Activated naive CD4-positive, alpha-beta T cell treated with anti-CD3 and anti-CD28 coated beads for 36 hours (primary cell): ENCODE measurements at regions of chr16 and their contacts with region 1.

Region 1: DNA sequence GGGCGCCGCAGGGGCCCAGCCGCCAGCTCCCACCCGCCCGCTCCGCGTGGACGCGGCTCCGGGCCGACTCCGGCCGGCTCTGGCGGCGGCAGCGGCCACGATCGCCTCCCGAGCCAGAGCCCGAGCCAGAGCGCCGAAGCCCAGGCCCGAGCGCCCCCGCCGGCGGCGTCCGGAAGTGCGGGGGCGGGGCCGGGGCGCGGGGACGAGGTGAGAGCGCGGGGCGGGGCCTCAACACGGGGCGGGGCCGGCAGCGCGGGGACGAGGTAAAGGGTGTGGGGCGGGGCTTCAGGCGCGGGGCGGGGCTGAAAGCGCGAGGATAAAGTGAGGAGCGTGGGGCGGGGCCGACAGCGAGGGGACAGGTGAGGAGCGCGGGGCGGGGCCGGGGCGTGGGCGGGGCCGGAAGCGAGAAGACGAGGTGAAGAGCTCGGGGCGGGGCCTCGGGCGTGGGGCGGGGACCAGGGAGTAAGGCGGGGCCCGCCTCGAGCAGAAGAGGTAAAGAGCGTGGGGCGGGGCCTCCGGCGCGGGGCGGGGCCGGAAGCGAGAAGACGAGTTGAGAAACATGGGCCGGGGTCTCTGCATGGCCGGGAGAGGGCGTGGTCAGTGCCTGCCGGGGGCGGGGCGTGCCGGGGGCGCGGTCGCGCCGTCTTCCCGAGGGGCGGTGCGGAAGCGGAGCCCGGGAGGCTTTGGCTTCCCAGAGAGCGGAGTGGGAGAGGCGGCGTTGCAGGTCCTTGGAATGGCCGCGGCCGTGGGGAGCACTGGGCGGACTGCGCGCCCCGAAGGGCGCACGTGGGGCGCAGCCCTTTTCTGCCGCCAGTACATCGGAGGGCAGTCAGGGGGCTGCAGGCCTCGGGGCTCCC is at the start of gene AXIN1:
- DNase-seq: peak; percentile 100
- H3K4me3 Mint-ChIP-seq: peak within 1 kb of the TSS; percentile 91
- H3K27ac Mint-ChIP-seq: peak within 1 kb of the TSS; percentile 82
- H3K4me1 Mint-ChIP-seq: peaks cover 48% of the 10 kb centered on the region
- H3K27me3 Mint-ChIP-seq: no peaks in the 10 kb centered on the region
- total RNA-seq, gene AXIN1: 17.5 to 17.9 TPM

Region 2: DNA sequence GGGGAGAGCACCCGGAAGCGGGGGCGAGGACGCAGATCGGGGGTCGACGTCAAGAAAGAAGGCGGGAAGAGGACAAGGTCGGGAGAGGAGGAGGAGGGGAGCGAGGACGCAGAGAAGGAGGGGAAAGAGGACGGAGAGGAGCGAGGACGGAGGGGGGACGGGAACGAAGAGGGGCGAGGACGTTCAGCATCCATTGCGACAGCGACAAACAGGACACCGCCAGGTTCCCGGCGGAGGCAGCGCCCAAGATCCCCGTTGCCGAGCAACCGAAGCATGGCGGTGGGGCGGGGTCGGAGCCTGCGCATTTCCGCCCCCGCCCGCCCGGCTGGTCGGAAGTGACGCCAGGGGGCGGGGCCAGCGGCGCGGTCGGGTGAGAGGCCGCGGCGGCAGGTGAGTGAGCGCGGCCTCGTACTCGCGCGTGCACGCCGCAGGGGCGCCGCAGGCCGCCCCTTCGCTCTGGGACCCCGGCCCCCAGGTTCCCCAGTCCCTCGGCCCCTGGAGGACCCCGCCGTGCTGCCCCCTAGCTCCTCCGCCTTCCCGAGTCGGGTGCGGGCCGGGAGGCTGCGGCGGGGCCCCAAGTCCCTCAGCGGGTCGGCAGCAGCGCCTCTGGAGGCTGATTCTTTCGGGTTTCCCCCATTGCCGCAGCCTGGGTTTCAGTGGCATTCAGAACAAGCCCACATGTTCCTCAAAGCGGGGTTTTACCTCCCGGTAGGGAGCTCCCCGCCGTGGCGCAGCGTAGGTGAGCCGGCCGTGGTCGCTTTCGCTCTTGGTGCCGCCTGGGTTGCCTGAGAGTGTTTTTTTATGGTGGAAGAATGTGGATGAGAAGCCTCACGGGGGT is 118.1 kb before region 1 on chr16 and contains the start of gene FAM234A:
- CTCF ChIA-PET with region 1: no interaction called
- intact Hi-C with region 1: loop called (anchors 1 kb)
- DNase-seq: peak; percentile 97
- H3K4me3 Mint-ChIP-seq: peak within 1 kb of the TSS; percentile 94
- H3K27ac Mint-ChIP-seq: peak within 1 kb of the TSS; percentile 97
- H3K4me1 Mint-ChIP-seq: peaks cover 23% of the 10 kb centered on the region
- H3K27me3 Mint-ChIP-seq: no peaks in the 10 kb centered on the region
- total RNA-seq, gene FAM234A: 25.9 to 27.4 TPM

Region 3: DNA sequence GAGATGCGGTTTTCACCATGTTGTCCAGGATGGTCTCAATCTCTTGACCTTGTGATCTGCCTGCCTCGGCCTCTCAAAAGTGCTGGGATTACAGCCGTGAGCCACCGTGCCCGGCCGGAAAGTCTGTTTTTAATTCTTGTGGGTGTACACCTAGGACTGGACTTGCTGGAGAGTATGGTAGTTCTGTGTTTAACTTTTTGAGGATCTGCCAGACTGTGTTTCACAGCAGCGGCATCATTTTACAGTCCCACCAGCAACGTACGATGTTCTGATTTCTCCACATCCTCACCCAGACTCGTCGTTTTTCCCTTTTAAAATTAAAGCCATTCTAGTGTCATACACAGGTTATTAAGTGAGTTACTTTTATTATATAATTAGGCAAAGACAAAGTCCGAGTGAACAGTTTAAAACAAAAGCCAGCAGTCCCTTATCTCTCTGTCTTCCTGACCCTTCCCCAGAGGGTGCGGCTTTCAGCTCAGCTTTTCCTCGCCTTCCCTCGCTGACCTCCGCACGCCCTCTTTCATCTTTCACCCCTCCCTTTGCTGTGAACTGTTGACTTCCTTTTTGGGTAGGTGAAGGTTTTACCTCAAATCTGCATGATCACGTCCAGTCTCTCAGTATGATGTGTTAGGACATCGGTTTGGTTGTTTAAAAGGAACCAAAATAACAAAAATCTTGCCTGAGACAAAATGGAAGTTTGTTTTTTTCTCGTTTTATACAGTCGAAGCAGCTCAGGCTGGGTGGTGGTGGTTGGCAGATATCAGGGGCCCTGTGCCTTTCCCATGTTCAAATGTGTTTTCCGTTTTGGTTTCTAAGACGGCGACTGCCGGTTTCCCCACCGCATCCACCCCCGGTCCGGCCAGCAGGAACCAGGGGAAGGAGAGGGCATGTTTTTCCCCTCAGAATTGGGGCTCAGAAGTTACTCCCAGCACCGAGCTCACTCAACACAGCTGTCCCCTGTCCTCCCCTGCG is 100.1 kb before region 1 on chr16:
- CTCF ChIA-PET with region 1: no interaction called
- intact Hi-C with region 1: loop called (anchors 5 kb)
- DNase-seq: peak; percentile 51
- H3K4me3 Mint-ChIP-seq: peak overlapping the region; percentile 57
- H3K27ac Mint-ChIP-seq: peak overlapping the region; percentile 50
- H3K4me1 Mint-ChIP-seq: peaks cover 19% of the 10 kb centered on the region
- H3K27me3 Mint-ChIP-seq: no peaks in the 10 kb centered on the region

Region 4: GRCh38 chr16:324451-325334 is 28.1 kb before region 1 on chr16:
- CTCF ChIA-PET with region 1: interaction called, 3 read pairs
- intact Hi-C with region 1: loop called (anchors 1 kb)
- DNase-seq: peak; percentile 83
- H3K4me3 Mint-ChIP-seq: peak overlapping the region; percentile 71
- H3K27ac Mint-ChIP-seq: peak overlapping the region; percentile 55
- H3K4me1 Mint-ChIP-seq: peaks cover 64% of the 10 kb centered on the region
- H3K27me3 Mint-ChIP-seq: no peaks in the 10 kb centered on the region

Region 5: GRCh38 chr16:339680-340079 is 13.1 kb before region 1 on chr16:
- CTCF ChIA-PET with region 1: no interaction called
- intact Hi-C with region 1: no loop called
- DNase-seq: no peak
- H3K4me3 Mint-ChIP-seq: no peak overlapping the region
- H3K27ac Mint-ChIP-seq: no peak overlapping the region
- H3K4me1 Mint-ChIP-seq: peaks cover 58% of the 10 kb centered on the region
- H3K27me3 Mint-ChIP-seq: no peaks in the 10 kb centered on the region

Region 6: GRCh38 chr16:370443-370842 is 17.7 kb after region 1 on chr16 and contains the start of gene MRPL28:
- CTCF ChIA-PET with region 1: no interaction called
- intact Hi-C with region 1: loop called (anchors 1 kb)
- DNase-seq: peak; percentile 97
- H3K4me3 Mint-ChIP-seq: peak within 1 kb of the TSS; percentile 81
- H3K27ac Mint-ChIP-seq: peak within 1 kb of the TSS; percentile 85
- H3K4me1 Mint-ChIP-seq: peaks cover 14% of the 10 kb centered on the region
- H3K27me3 Mint-ChIP-seq: no peaks in the 10 kb centered on the region
- total RNA-seq, gene MRPL28: 68.3 to 74.0 TPM

Region 7: GRCh38 chr16:401468-402348 is 48.9 kb after region 1 on chr16 and contains the start of gene DECR2:
- CTCF ChIA-PET with region 1: no interaction called
- intact Hi-C with region 1: loop called (anchors 2 kb)
- DNase-seq: peak; percentile 99
- H3K4me3 Mint-ChIP-seq: peak within 1 kb of the TSS; percentile 83
- H3K27ac Mint-ChIP-seq: peak within 1 kb of the TSS; percentile 83
- H3K4me1 Mint-ChIP-seq: peaks cover 17% of the 10 kb centered on the region
- H3K27me3 Mint-ChIP-seq: no peaks in the 10 kb centered on the region
- total RNA-seq, gene DECR2: 8.9 to 9.6 TPM